Aorta (tissue), 5 donors: ENCODE measurements at regions of chr5 and their contacts with region 1.

Region 1: DNA sequence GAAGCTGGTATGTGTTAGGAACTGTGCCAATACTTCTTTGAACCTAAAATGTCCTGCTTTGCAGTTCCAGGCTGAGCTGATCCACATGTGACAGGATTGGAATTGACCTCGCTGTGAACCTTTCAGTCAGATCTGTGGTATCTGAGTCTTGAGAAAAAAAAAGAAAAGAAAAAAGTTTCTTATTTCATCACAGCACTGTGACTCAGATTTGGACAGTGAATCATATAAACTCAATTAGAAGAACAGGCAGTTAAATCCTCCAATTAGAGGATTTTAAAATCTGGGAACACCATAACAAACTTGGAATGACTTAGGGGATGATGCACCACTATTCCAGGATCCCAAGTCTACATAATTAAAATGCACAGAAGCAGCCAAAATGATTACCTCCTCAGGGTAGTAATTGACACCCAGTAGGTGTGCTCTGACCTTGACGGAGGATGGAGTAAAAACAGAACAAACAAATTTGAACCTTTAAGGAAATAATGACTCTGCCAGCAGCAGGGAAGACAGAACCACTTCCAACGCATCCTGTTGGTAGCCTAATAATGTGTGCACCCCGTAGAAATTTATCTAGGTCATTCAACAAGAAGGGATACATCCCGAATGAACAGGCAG is 57.8 kb upstream of the RAI14 start:
- DNase-seq: no peak
- ATAC-seq: peak; percentile 83
- H3K4me3 ChIP-seq: no peak overlapping the region
- H3K27ac ChIP-seq: peak overlapping the region in 1 of 2 donors; percentile 17
- H3K4me1 ChIP-seq: peaks cover 4 to 6% of the 10 kb centered on the region in 2 donors
- H3K27me3 ChIP-seq: no peaks in the 10 kb centered on the region

Region 2: GRCh38 chr5:34551911-34552433 is 46.3 kb before region 1 on chr5:
- intact Hi-C with region 1: loop called in 1 of 2 experiments (anchors 5 kb)
- DNase-seq: no peak
- ATAC-seq: peak; percentile 71
- H3K4me3 ChIP-seq: no peak overlapping the region
- H3K27ac ChIP-seq: peak overlapping the region in 1 of 2 donors; percentile 81
- H3K4me1 ChIP-seq: peaks cover 0 to 3% of the 10 kb centered on the region in 2 donors
- H3K27me3 ChIP-seq: no peaks in the 10 kb centered on the region

Region 3: GRCh38 chr5:34648840-34649158 is 50.5 kb after region 1 on chr5:
- intact Hi-C with region 1: no loop called
- DNase-seq: no peak
- ATAC-seq: no peak
- H3K4me3 ChIP-seq: no peak overlapping the region
- H3K27ac ChIP-seq: no peak overlapping the region
- H3K4me1 ChIP-seq: no peaks in the 10 kb centered on the region
- H3K27me3 ChIP-seq: no peaks in the 10 kb centered on the region